ENCODE measurements at regions of chr2 and their contacts with region 1.

Region 1: GRCh38 chr2:26745609-26746327 is 18.3 kb upstream of the SLC35F6 start:
- DNase-seq: peak; percentile 56
- H3K4me3 ChIP-seq: no peak overlapping the region
- H3K27ac ChIP-seq: no peak overlapping the region
- H3K27me3 ChIP-seq: peaks cover 6% of the 10 kb centered on the region
- CTCF ChIP-seq: peak; percentile 96

Region 2: DNA sequence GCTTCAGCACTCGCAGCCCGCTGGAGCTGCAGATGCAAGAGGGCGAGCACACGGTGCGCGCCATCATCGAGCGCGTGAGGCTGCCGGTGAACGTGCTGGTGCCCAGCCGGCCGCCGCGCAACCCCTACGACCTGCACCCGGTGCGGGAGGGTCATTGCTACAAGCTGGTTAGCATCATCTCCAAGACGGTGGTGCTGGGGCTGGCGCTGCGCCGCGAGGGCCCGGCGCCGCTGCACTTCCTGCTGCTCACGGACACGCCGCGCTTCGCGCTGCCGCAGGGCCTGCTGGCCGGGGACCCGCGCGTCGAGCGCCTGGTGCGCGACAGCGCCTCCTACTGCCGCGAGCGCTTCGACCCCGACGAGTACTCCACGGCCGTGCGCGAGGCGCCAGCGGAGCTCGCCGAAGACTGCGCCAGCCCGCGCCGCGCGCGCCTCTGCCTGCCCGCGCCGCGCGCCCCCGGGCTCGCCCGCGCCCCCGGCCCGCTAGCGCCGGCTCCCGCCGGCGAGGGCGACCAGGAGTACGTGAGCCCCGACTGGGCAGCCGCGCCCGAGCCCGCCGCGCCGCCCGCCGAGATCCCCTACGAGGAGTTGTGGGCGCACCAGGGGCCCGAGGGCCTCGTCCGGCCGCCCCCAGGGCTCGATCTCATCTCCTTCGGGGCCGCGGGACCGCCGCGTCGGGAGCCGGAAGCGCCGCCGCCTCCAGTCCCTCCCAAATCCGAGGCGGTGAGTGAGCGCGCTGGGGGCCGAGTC is 561.0 kb before region 1 on chr2:
- CTCF ChIA-PET with region 1: no interaction called
- POLR2A ChIA-PET with region 1: no interaction called
- DNase-seq: peak; percentile 45
- H3K4me3 ChIP-seq: peak overlapping the region; percentile 60
- H3K27ac ChIP-seq: no peak overlapping the region
- H3K27me3 ChIP-seq: no peaks in the 10 kb centered on the region
- CTCF ChIP-seq: peak; percentile 54

Region 3: DNA sequence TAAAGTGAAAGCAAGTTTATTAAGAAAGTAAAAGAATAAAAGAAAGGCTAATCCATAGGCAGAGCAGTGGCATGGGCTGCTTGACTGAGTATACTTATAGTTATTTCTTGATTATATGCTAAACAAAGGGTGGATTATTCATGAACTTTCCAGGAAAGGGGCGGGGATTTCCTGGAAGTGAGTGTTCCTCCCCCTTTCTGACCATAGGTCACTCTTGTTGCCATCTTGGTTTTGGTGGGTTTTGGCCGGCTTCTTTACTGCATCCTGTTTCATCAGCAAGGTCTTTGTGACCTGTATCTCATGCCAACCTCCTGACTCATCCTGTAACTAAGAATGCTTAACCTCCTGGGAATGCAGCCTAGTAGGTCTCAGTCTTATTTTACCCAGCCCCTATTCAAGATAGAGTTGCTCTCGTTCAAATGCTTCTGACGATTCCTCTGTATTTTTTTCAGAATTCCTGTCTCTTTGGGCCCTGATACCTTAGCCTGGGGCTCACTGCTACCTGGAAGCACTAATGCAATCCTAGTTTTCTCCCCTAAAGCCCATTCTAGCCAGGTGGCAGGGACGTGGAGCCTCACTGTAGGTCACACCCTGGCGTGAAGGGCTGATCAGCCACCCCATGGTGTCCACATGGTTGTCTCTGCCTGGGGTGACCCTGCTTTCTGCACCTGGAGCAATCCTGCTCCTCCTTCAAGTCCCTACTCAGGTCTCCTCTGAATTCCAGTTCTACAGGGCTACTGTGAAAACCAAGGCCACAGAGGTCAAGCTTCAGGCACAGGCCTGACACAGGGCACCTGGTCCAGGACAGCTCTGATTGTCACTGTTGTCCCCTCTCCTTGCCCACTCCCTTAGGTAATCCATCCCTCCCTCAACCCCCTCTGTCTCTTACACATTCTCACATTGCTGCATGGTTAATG is 12.4 kb after region 1 on chr2:
- CTCF ChIA-PET with region 1: interaction called, 26 read pairs
- POLR2A ChIA-PET with region 1: no interaction called
- DNase-seq: peak; percentile 98
- H3K4me3 ChIP-seq: peak overlapping the region; percentile 27; the same call in 1 of the 2 replicates
- H3K27ac ChIP-seq: peak overlapping the region; percentile 100
- H3K27me3 ChIP-seq: no peaks in the 10 kb centered on the region
- CTCF ChIP-seq: no peak

Region 4: GRCh38 chr2:27095745-27096651 is 350.2 kb after region 1 on chr2:
- CTCF ChIA-PET with region 1: no interaction called
- POLR2A ChIA-PET with region 1: no interaction called
- DNase-seq: no peak
- H3K4me3 ChIP-seq: peak overlapping the region; percentile 32
- H3K27ac ChIP-seq: no peak overlapping the region
- H3K27me3 ChIP-seq: no peaks in the 10 kb centered on the region
- CTCF ChIP-seq: no peak

Region 5: DNA sequence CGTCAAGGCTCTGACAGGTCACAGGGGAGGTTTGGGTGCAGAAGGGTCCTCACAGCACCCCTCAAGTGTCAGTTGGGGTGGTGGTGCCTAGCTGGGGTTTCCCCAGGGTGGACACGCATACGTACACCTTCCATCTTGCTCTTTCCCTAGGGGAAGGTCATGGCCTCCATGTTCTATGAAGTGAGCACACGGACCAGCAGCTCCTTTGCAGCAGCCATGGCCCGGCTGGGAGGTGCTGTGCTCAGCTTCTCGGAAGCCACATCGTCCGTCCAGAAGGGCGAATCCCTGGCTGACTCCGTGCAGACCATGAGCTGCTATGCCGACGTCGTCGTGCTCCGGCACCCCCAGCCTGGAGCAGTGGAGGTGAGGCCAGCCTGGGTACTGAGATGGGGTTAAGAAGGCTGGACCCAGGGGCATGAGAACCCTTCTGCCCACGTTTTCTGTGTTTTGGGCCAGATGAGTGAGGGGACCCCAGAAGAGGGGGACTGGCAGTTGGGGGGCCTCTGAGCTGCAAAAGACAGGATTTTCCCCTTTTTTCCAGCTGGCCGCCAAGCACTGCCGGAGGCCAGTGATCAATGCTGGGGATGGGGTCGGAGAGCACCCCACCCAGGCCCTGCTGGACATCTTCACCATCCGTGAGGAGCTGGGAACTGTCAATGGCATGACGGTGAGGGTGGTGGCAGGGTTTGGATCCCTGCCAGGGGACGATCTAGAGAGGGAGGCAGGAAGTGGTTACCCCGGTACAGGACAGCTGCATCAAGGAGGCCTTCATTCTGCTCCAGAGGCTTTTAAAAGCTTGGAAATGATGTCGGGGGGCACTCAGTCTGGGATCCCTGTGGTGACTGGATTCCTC is 496.2 kb after region 1 on chr2:
- CTCF ChIA-PET with region 1: no interaction called
- POLR2A ChIA-PET with region 1: no interaction called
- DNase-seq: no peak
- H3K4me3 ChIP-seq: no peak overlapping the region
- H3K27ac ChIP-seq: no peak overlapping the region
- H3K27me3 ChIP-seq: no peaks in the 10 kb centered on the region
- CTCF ChIP-seq: no peak

Region 6: GRCh38 chr2:27271631-27272340 is 526.0 kb after region 1 on chr2:
- CTCF ChIA-PET with region 1: no interaction called
- POLR2A ChIA-PET with region 1: no interaction called
- DNase-seq: no peak
- H3K4me3 ChIP-seq: no peak overlapping the region
- H3K27ac ChIP-seq: no peak overlapping the region
- H3K27me3 ChIP-seq: peaks cover 27% of the 10 kb centered on the region
- CTCF ChIP-seq: no peak